Activated B cell treated with CpG ODN at 0.5 μM for 24 hours (primary cell): ENCODE measurements at regions of chr10 and their contacts with region 1.

Region 1: GRCh38 chr10:72354478-72355213 is at the start of gene DNAJB12:
- DNase-seq: peak; percentile 89
- ATAC-seq: peak; percentile 84
- H3K4me3 Mint-ChIP-seq: peak within 1 kb of the TSS; percentile 99
- H3K27ac Mint-ChIP-seq: peak within 1 kb of the TSS; percentile 99
- H3K4me1 Mint-ChIP-seq: peaks cover 35% of the 10 kb centered on the region
- H3K27me3 Mint-ChIP-seq: no peaks in the 10 kb centered on the region
- CTCF ChIP-seq: no peak
- total RNA-seq, gene DNAJB12: 39.0 and 39.9 TPM in 2 replicates

Region 2: DNA sequence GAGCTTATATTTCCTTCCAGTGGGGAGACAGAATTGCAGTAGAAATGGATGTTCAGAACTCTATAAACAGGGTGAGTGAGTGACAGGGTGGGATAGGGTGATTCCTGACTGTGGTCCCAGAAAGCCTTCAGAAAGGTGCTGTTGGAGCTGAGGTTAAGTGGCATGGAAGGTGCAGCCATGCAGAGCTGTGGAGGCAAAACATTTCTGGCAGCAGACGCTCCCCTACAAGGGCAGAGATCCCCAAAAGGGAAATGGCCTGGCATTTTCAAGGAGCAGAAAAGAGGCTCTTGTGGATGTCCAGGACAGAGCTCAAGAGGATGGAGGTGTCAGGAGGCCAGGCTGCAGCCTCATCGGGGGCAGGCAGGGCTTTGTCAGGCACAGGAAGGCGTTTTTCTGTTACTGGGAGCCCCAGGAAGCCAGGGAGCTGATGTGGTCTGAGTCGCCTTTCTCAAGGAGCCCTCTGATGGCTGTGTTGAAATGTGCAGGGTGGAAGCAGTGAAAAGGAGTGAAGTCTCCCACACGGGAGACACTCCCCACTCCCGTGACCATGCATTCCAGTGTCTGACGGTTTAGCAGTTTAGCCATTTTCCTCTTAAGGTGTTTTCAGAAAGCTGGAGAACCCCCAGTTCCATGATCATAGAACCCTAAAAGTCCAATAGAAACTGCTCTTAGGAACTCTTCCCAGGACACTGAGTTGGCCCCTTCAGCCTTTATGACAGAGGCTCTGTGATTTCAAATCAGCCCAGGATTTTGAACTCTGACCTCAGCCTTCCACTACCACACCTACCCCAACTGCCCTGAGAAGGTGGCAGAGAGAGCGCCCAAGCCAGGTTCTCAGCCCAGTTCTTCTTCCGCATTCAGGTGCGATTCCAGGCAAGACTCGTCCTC is 731.3 kb before region 1 on chr10:
- CTCF ChIA-PET with region 1: no interaction called
- POLR2A ChIA-PET with region 1: no interaction called
- intact Hi-C with region 1: no loop called
- DNase-seq: no peak
- ATAC-seq: no peak
- H3K4me3 Mint-ChIP-seq: no peak overlapping the region
- H3K27ac Mint-ChIP-seq: no peak overlapping the region
- H3K4me1 Mint-ChIP-seq: peaks cover 6% of the 10 kb centered on the region
- H3K27me3 Mint-ChIP-seq: peaks cover 6% of the 10 kb centered on the region
- CTCF ChIP-seq: no peak

Region 3: GRCh38 chr10:72812753-72813430 is 458.2 kb after region 1 on chr10:
- CTCF ChIA-PET with region 1: no interaction called
- POLR2A ChIA-PET with region 1: interaction called, 11 read pairs
- intact Hi-C with region 1: no loop called
- DNase-seq: no peak
- ATAC-seq: no peak
- H3K4me3 Mint-ChIP-seq: no peak overlapping the region
- H3K27ac Mint-ChIP-seq: no peak overlapping the region
- H3K4me1 Mint-ChIP-seq: peaks cover 4% of the 10 kb centered on the region
- H3K27me3 Mint-ChIP-seq: no peaks in the 10 kb centered on the region
- CTCF ChIP-seq: no peak